Activated CD8-positive, alpha-beta T cell treated with anti-CD3 and anti-CD28 coated beads for 36 hours (primary cell): ENCODE measurements at regions of chr11 and their contacts with region 1.

Region 1: GRCh38 chr11:15006139-15006759 is 34.1 kb upstream of the CALCA start:
- DNase-seq: peak; percentile 9
- ATAC-seq: peak; percentile 69
- H3K4me3 Mint-ChIP-seq: no peak overlapping the region
- H3K27ac Mint-ChIP-seq: no peak overlapping the region
- H3K4me1 Mint-ChIP-seq: no peaks in the 10 kb centered on the region
- H3K27me3 Mint-ChIP-seq: peaks cover 28% of the 10 kb centered on the region
- CTCF ChIP-seq: peak; percentile 89

Region 2: GRCh38 chr11:14914541-14914940 is 91.7 kb before region 1 on chr11:
- CTCF ChIA-PET with region 1: interaction called, 199 read pairs
- POLR2A ChIA-PET with region 1: no interaction called
- intact Hi-C with region 1: loop called (anchors 5 kb)
- DNase-seq: no peak
- ATAC-seq: no peak
- H3K4me3 Mint-ChIP-seq: no peak overlapping the region
- H3K27ac Mint-ChIP-seq: no peak overlapping the region
- H3K4me1 Mint-ChIP-seq: no peaks in the 10 kb centered on the region
- H3K27me3 Mint-ChIP-seq: no peaks in the 10 kb centered on the region
- CTCF ChIP-seq: no peak

Region 3: DNA sequence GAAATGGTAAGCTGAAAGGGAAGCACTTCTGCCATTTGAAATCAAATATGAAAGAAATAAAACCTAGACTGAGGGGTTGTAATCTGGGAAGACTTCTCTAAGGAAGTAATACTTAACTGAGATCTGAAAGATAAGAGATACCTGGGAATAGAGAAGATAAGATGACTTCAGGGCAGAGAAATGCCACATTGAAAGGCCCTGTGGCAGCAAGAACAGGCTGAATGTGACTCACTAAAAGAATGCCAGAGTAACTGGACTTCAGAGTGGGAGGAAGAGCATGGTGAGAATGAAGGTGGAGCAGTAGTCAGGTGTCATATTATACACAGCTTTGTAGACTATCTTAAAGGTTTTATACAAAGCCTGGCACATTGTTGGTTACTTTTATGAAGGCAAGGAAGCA is 51.7 kb before region 1 on chr11:
- CTCF ChIA-PET with region 1: interaction called, 17 read pairs
- POLR2A ChIA-PET with region 1: no interaction called
- intact Hi-C with region 1: no loop called
- DNase-seq: no peak
- ATAC-seq: no peak
- H3K4me3 Mint-ChIP-seq: no peak overlapping the region
- H3K27ac Mint-ChIP-seq: no peak overlapping the region
- H3K4me1 Mint-ChIP-seq: no peaks in the 10 kb centered on the region
- H3K27me3 Mint-ChIP-seq: no peaks in the 10 kb centered on the region
- CTCF ChIP-seq: no peak

Region 4: GRCh38 chr11:14974515-14975251 is 31.6 kb before region 1 on chr11:
- CTCF ChIA-PET with region 1: interaction called, 114 read pairs
- POLR2A ChIA-PET with region 1: interaction called, 4 read pairs
- intact Hi-C with region 1: loop called (anchors 5 kb)
- DNase-seq: peak; percentile 85
- ATAC-seq: peak; percentile 70
- H3K4me3 Mint-ChIP-seq: peak overlapping the region; percentile 67
- H3K27ac Mint-ChIP-seq: no peak overlapping the region
- H3K4me1 Mint-ChIP-seq: peaks cover 34% of the 10 kb centered on the region
- H3K27me3 Mint-ChIP-seq: peaks cover 62% of the 10 kb centered on the region
- CTCF ChIP-seq: peak; percentile 80

Region 5: DNA sequence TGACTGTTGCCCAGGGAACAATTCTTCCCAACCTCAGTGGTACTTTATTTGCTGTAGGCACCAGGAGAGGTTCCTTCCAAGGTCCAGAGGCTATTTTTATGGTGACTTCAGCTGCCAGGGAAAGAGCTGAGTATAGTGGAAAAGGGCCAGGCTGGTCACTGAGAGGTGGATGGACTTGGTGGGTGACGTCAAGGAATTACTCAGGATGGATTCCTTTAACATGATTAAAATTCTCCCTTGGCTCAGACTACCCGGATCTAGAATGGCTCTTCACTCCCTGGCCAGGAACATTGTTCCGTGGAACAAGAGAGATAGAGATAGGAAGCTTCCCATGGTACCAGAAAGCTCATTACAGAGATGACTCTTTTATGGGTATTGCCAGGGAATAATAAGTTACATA is 25.4 kb before region 1 on chr11:
- CTCF ChIA-PET with region 1: interaction called, 114 read pairs
- POLR2A ChIA-PET with region 1: no interaction called
- intact Hi-C with region 1: no loop called
- DNase-seq: no peak
- ATAC-seq: no peak
- H3K4me3 Mint-ChIP-seq: no peak overlapping the region
- H3K27ac Mint-ChIP-seq: no peak overlapping the region
- H3K4me1 Mint-ChIP-seq: peaks cover 2% of the 10 kb centered on the region
- H3K27me3 Mint-ChIP-seq: peaks cover 17% of the 10 kb centered on the region
- CTCF ChIP-seq: no peak

Region 6: GRCh38 chr11:15053191-15053685 is 47.0 kb after region 1 on chr11:
- CTCF ChIA-PET with region 1: interaction called, 10 read pairs
- POLR2A ChIA-PET with region 1: no interaction called
- intact Hi-C with region 1: no loop called
- DNase-seq: peak; percentile 51
- ATAC-seq: peak; percentile 89
- H3K4me3 Mint-ChIP-seq: peak overlapping the region; percentile 6
- H3K27ac Mint-ChIP-seq: peak overlapping the region; percentile 62
- H3K4me1 Mint-ChIP-seq: peaks cover 20% of the 10 kb centered on the region
- H3K27me3 Mint-ChIP-seq: peaks cover 5% of the 10 kb centered on the region
- CTCF ChIP-seq: no peak